Activated CD8-positive, alpha-beta T cell treated with anti-CD3 and anti-CD28 coated beads, Interleukin-2, amount 10 ng/mL, durations not matched to agents 7 days and 5 days (primary cell): ENCODE measurements at regions of chr7 and their contacts with region 1.

Region 1: DNA sequence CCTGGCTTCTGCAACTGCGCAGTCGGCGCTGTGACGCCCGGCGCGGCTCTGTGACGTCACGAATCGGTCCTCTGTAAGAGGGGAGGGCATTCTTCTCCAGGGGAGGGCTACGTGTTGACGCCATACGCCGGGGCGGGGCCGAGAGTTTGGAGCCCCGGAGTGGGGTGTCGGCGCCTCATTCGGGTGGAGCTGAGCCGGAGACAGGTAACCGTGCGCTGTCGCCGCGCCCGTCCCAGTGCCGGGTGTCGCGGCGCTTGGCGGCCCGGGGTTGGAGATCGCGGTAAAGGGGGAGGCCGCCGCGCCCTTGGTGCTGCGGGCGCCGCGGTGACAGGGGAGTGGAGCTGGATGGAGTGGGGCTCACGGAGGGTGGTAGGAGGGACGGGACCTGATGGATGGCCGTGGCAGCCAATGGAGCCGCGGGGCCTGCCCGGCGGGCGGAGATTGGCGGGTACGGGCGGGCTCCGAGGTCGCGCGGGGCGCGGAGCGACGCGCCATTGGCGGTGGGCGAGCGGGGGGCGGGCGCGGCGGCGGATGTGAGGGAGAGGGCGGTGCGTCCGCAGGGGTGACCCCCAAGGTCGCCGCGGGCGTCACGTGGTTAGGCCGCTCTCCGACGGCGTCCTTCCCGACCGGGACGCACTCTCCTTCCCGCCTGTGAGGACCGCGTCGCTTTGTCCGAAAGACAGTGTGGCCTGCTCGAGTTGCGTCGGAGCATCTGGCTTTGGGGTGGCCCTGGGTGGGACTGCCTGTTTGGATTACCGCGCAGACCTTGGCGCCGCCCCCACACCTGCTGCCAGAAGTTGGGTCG is at the start of gene OGDH:
- DNase-seq: peak; percentile 100
- ATAC-seq: peak; percentile 98
- H3K4me3 Mint-ChIP-seq: peak within 1 kb of the TSS; percentile 98
- H3K27ac Mint-ChIP-seq: peak within 1 kb of the TSS; percentile 100
- H3K4me1 Mint-ChIP-seq: peaks cover 42% of the 10 kb centered on the region
- H3K27me3 Mint-ChIP-seq: peaks cover 8% of the 10 kb centered on the region
- total RNA-seq, gene OGDH: 113 to 114 TPM

Region 2: DNA sequence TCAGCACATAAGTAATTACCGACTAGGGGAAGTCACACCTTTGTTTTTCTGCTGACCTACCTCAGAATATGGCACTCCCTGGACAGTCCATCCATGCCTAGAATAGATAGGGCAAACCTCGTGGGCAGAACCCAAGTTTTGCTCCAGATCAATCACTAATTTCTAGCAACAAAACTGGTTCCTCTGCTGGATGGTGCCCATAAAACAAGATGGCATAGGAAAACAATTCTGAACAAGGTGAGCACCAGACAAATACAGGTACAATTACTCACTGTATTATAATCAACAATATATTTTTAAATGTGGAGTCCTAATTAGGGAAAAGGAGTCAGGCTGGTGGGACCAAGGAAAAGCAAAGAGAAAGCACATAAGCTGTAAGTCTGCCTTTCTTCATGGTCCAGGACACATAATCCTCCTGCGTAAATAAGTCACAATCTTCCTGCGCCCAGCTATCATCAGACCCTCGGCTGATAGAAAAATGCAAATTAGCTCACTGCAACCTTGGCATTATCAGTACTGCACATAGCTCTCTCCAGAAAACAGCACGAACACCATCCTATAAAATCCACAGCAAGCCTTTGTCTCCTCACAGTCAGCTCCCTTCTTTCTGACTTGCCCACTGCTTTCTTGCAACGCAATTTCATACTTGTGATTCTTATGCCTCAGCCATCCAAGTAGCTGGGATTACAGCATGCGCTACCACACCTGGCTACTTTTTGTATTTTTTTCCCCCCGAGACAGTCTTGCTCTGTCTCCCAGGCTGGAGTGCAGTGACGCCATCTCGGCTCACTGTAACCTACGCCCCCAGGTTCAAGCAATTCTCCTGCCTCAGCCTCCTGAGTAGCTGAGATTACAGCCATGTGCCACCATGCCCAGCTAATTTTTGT is 715.3 kb before region 1 on chr7:
- CTCF ChIA-PET with region 1: no interaction called
- POLR2A ChIA-PET with region 1: no interaction called
- DNase-seq: no peak
- ATAC-seq: no peak
- H3K4me3 Mint-ChIP-seq: no peak overlapping the region
- H3K27ac Mint-ChIP-seq: no peak overlapping the region
- H3K4me1 Mint-ChIP-seq: peaks cover 31% of the 10 kb centered on the region
- H3K27me3 Mint-ChIP-seq: no peaks in the 10 kb centered on the region

Region 3: DNA sequence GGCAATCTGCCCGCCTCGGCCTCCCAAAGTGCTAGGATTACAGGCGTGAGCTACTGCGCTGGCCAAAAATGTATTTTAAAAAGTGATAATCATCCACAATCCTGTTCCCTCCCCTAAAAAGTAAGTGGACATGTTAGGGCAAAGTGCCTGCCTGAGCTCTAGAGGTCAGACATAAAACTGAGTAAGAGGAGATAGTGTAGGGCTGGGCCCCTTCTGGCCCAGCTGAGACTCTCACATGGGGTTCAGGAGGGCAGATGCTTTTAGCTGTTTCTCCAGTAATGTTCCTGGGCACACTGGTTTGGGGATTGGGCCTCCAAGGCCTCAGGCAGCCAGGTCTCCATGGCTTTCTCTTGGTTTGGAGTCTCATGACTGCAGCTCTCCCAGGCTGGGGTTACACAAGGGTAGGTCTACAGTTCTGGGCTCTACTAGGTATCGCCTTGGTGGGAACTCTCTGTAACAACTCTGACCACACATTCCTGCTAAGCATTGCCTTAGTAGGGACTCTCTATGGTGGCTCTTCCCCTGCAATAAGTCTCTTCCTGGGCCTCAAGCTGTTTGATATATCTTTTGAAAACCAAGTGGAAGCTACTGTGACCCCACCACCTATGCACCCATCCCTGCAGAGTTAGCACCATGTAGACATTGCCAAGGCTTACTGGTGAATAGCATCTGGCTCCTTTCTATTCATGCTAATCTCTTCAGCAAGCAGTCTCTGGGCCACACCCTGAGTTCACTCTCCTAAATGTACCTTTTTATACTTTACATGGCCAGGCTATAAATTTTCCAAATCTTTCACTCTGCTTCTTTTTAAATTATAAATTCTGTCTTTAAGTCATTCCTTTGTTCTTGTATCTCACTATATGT is 109.3 kb before region 1 on chr7:
- CTCF ChIA-PET with region 1: no interaction called
- POLR2A ChIA-PET with region 1: no interaction called
- DNase-seq: no peak
- ATAC-seq: no peak
- H3K4me3 Mint-ChIP-seq: no peak overlapping the region
- H3K27ac Mint-ChIP-seq: no peak overlapping the region
- H3K4me1 Mint-ChIP-seq: no peaks in the 10 kb centered on the region
- H3K27me3 Mint-ChIP-seq: peaks cover 21% of the 10 kb centered on the region

Region 4: GRCh38 chr7:44581879-44582603 is 24.6 kb before region 1 on chr7 and contains the start of gene TMED4:
- CTCF ChIA-PET with region 1: no interaction called
- POLR2A ChIA-PET with region 1: interaction called, 26 read pairs
- DNase-seq: peak; percentile 100
- ATAC-seq: peak; percentile 95
- H3K4me3 Mint-ChIP-seq: peak within 1 kb of the TSS; percentile 93
- H3K27ac Mint-ChIP-seq: peak within 1 kb of the TSS; percentile 91
- H3K4me1 Mint-ChIP-seq: peaks cover 38% of the 10 kb centered on the region
- H3K27me3 Mint-ChIP-seq: peaks cover 3% of the 10 kb centered on the region
- total RNA-seq, gene TMED4: 63.8 to 65.9 TPM

Region 5: DNA sequence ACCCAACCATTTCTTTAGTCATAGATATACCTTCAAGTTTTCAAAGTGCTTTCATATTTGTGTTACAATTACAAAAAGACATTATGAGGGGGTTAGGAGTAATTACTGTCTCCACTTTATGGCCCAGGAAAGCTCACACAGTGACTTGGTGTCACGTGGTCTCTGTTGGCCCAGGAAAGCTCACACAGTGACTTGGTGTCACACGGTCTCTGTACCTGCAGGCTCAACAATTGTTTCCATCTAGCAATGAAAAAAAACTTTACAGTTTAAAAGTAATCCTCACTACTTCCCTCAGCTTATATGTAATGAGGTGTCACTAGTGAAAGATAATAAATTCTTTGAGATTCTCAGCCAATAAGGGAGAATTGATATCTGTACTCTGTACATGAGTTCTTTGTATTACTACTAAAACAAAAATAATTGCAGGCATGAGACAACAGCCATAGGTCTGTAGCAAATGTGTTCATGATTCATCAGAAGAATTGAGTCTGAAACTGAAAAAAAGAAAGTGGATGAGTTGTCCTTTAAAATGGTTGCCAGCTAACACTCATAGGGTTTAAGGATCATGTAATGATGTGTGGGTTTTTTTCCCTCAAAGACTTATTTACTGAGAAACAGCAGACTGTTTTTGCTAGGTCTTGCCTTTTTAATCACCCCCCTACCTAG is 10.7 kb after region 1 on chr7:
- CTCF ChIA-PET with region 1: interaction called, 7 read pairs
- POLR2A ChIA-PET with region 1: interaction called, 15 read pairs
- DNase-seq: no peak
- ATAC-seq: peak; percentile 50
- H3K4me3 Mint-ChIP-seq: no peak overlapping the region
- H3K27ac Mint-ChIP-seq: peak overlapping the region; percentile 48
- H3K4me1 Mint-ChIP-seq: peaks cover 73% of the 10 kb centered on the region
- H3K27me3 Mint-ChIP-seq: no peaks in the 10 kb centered on the region

Region 6: GRCh38 chr7:44622307-44623151 is 15.9 kb after region 1 on chr7:
- CTCF ChIA-PET with region 1: interaction called, 7 read pairs
- POLR2A ChIA-PET with region 1: interaction called, 19 read pairs
- DNase-seq: peak; percentile 51
- ATAC-seq: peak; percentile 75
- H3K4me3 Mint-ChIP-seq: peak overlapping the region; percentile 19
- H3K27ac Mint-ChIP-seq: peak overlapping the region; percentile 82
- H3K4me1 Mint-ChIP-seq: peaks cover 87% of the 10 kb centered on the region
- H3K27me3 Mint-ChIP-seq: no peaks in the 10 kb centered on the region

Region 7: GRCh38 chr7:44631458-44632115 is 24.9 kb after region 1 on chr7:
- CTCF ChIA-PET with region 1: interaction called, 8 read pairs
- POLR2A ChIA-PET with region 1: interaction called, 107 read pairs
- DNase-seq: peak; percentile 48
- ATAC-seq: peak; percentile 13
- H3K4me3 Mint-ChIP-seq: peak overlapping the region; percentile 38
- H3K27ac Mint-ChIP-seq: peak overlapping the region; percentile 89
- H3K4me1 Mint-ChIP-seq: peaks cover 76% of the 10 kb centered on the region
- H3K27me3 Mint-ChIP-seq: no peaks in the 10 kb centered on the region

Region 8: DNA sequence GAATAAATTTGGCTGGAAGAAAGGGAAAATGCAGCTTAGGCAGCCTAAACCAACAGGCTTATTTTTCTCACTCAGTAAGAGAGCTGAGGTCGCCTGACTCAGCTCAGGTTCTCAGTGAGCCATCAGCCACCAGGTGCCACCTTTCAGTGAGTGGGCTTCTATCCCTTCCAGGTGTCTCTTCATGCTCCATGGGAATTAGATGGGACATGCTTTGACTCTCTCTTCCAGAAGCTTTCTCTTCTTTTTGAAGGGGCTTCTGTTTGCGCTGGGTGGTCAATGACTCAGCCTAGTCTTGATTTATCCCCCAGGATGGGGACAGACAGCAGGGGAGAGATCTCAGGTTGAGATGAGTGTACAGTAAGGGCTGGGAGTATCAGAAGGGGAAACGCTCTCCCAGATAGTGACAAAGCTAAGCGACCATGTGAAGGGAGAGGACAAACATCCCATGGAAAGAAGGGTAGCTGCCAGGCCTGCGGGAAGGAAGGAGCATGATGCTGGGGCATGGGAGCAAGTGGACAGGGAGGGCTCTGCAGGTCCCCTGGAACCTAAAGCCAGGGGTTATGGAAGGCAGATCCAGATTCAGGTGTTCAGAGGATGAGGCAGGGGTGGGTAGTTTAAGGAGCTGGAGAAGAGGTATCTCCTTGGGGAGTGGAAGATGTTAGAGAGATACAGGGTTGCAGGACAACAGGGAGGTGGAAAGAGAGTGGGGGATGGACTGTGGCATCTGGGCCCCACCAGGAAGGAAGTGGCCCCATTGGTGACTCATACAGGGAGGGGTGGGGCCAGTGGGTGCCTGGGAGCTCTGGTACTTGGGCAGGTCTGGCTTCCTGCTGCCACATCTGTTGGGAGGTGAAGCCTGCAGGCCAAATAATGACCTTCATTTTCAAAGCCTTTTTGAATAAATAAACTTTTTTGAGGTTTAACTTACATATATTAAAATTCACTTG is 32.2 kb after region 1 on chr7:
- CTCF ChIA-PET with region 1: interaction called, 21 read pairs
- POLR2A ChIA-PET with region 1: interaction called, 107 read pairs
- DNase-seq: peak; percentile 92
- ATAC-seq: peak; percentile 87
- H3K4me3 Mint-ChIP-seq: peak overlapping the region; percentile 77
- H3K27ac Mint-ChIP-seq: peak overlapping the region; percentile 100
- H3K4me1 Mint-ChIP-seq: peaks cover 79% of the 10 kb centered on the region
- H3K27me3 Mint-ChIP-seq: no peaks in the 10 kb centered on the region

Region 9: GRCh38 chr7:44748045-44748947 is 141.6 kb after region 1 on chr7 and contains the start of gene ZMIZ2:
- CTCF ChIA-PET with region 1: no interaction called
- POLR2A ChIA-PET with region 1: interaction called, 16 read pairs
- DNase-seq: peak; percentile 92
- ATAC-seq: peak; percentile 87
- H3K4me3 Mint-ChIP-seq: peak within 1 kb of the TSS; percentile 74
- H3K27ac Mint-ChIP-seq: peak within 1 kb of the TSS; percentile 84
- H3K4me1 Mint-ChIP-seq: peaks cover 37% of the 10 kb centered on the region
- H3K27me3 Mint-ChIP-seq: no peaks in the 10 kb centered on the region
- total RNA-seq, gene ZMIZ2: 77.8 to 80.7 TPM